Activated B cell treated with CpG ODN at 0.5 μM for 24 hours (primary cell): ENCODE measurements at regions of chr13 and their contacts with region 1.

Region 1: GRCh38 chr13:95185851-95186250 is 115.4 kb downstream of the ABCC4 start:
- DNase-seq: no peak
- ATAC-seq: peak; percentile 61
- H3K4me3 Mint-ChIP-seq: peak overlapping the region; percentile 20
- H3K27ac Mint-ChIP-seq: no peak overlapping the region
- H3K4me1 Mint-ChIP-seq: peaks cover 17% of the 10 kb centered on the region
- H3K27me3 Mint-ChIP-seq: no peaks in the 10 kb centered on the region
- CTCF ChIP-seq: no peak

Region 2: GRCh38 chr13:94674609-94675348 is 511.1 kb before region 1 on chr13:
- CTCF ChIA-PET with region 1: no interaction called
- POLR2A ChIA-PET with region 1: no interaction called
- intact Hi-C with region 1: loop called (anchors 5 kb)
- DNase-seq: no peak
- ATAC-seq: no peak
- H3K4me3 Mint-ChIP-seq: no peak overlapping the region
- H3K27ac Mint-ChIP-seq: no peak overlapping the region
- H3K4me1 Mint-ChIP-seq: no peaks in the 10 kb centered on the region
- H3K27me3 Mint-ChIP-seq: peaks cover 16% of the 10 kb centered on the region
- CTCF ChIP-seq: peak; percentile 38

Region 3: DNA sequence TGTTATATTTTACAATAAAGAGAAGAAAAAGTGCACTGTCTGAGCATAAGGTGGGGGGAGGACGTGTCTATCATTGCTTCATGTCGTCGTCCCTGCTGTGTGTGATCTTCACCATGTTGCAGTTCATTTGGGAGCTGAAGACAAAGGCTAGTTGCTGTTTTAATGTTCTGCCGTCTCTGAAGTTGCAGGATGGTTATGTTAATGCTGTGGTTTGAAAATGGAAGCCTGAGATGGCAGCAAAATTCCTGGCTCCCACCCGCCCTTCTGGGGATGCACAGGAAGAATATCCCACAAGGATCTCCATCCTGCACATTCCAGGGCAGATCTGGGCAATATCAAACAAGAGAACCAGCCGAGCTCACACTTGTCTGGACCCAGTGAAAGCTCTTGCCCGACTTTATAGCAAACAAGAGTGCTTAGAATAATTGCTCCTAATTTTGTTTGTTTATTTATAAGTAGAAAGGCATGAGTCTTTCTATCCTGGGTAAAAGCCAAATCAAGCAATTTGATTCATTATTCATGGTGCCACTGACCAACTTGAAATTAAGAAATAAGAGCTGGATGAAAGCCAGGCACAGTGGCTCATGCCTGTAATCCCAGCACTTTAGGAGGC is 225.7 kb after region 1 on chr13:
- CTCF ChIA-PET with region 1: interaction called, 371 read pairs
- POLR2A ChIA-PET with region 1: no interaction called
- intact Hi-C with region 1: no loop called
- DNase-seq: no peak
- ATAC-seq: no peak
- H3K4me3 Mint-ChIP-seq: no peak overlapping the region
- H3K27ac Mint-ChIP-seq: no peak overlapping the region
- H3K4me1 Mint-ChIP-seq: no peaks in the 10 kb centered on the region
- H3K27me3 Mint-ChIP-seq: peaks cover 11% of the 10 kb centered on the region
- CTCF ChIP-seq: no peak